WTC11 (cell line): ENCODE measurements at regions of chr6 and their contacts with region 1.

Region 1: GRCh38 chr6:90393232-90393884 is 96.7 kb upstream of the BACH2 start:
- DNase-seq: peak; percentile 69
- ATAC-seq: peak; percentile 92
- H3K4me3 Mint-ChIP-seq: no peak overlapping the region
- H3K27ac Mint-ChIP-seq: no peak overlapping the region
- H3K4me1 Mint-ChIP-seq: peaks cover 26% of the 10 kb centered on the region
- H3K27me3 Mint-ChIP-seq: peaks cover 2% of the 10 kb centered on the region; the same call in 1 of the 2 replicates
- CTCF ChIP-seq: peak; percentile 56

Region 2: GRCh38 chr6:90285611-90286381 is 107.6 kb before region 1 on chr6:
- CTCF ChIA-PET with region 1: interaction called, 30 read pairs
- POLR2A ChIA-PET with region 1: no interaction called
- DNase-seq: peak; percentile 62
- ATAC-seq: peak; percentile 75
- H3K4me3 Mint-ChIP-seq: peak overlapping the region; percentile 24; the same call in 1 of the 2 replicates
- H3K27ac Mint-ChIP-seq: peak overlapping the region; percentile 3; the same call in 1 of the 2 replicates
- H3K4me1 Mint-ChIP-seq: peaks cover 45% of the 10 kb centered on the region
- H3K27me3 Mint-ChIP-seq: no peaks in the 10 kb centered on the region
- CTCF ChIP-seq: no peak

Region 3: GRCh38 chr6:90296346-90297114 is 96.8 kb before region 1 on chr6 and contains the start of gene BACH2:
- CTCF ChIA-PET with region 1: interaction called, 11 read pairs
- POLR2A ChIA-PET with region 1: no interaction called
- DNase-seq: peak; percentile 95
- ATAC-seq: peak; percentile 75
- H3K4me3 Mint-ChIP-seq: peak within 1 kb of the TSS; percentile 74
- H3K27ac Mint-ChIP-seq: no peak within 1 kb of the TSS
- H3K4me1 Mint-ChIP-seq: peaks cover 34% of the 10 kb centered on the region
- H3K27me3 Mint-ChIP-seq: peaks cover 51% of the 10 kb centered on the region
- CTCF ChIP-seq: no peak
- total RNA-seq, gene BACH2: 3.9 to 5.9 TPM (median 4.5 TPM) in 3 replicates

Region 4: GRCh38 chr6:90403489-90404381 is 10.4 kb after region 1 on chr6:
- CTCF ChIA-PET with region 1: interaction called, 23 read pairs
- POLR2A ChIA-PET with region 1: no interaction called
- DNase-seq: no peak
- ATAC-seq: peak; percentile 82
- H3K4me3 Mint-ChIP-seq: no peak overlapping the region
- H3K27ac Mint-ChIP-seq: no peak overlapping the region
- H3K4me1 Mint-ChIP-seq: peaks cover 28% of the 10 kb centered on the region
- H3K27me3 Mint-ChIP-seq: peaks cover 29% of the 10 kb centered on the region
- CTCF ChIP-seq: no peak

Region 5: GRCh38 chr6:90444160-90444714 is 50.9 kb after region 1 on chr6:
- CTCF ChIA-PET with region 1: interaction called, 11 read pairs
- POLR2A ChIA-PET with region 1: no interaction called
- DNase-seq: no peak
- ATAC-seq: no peak
- H3K4me3 Mint-ChIP-seq: no peak overlapping the region
- H3K27ac Mint-ChIP-seq: no peak overlapping the region
- H3K4me1 Mint-ChIP-seq: peaks cover 37% of the 10 kb centered on the region
- H3K27me3 Mint-ChIP-seq: no peaks in the 10 kb centered on the region; the same call in 1 of the 2 replicates
- CTCF ChIP-seq: no peak

Region 6: DNA sequence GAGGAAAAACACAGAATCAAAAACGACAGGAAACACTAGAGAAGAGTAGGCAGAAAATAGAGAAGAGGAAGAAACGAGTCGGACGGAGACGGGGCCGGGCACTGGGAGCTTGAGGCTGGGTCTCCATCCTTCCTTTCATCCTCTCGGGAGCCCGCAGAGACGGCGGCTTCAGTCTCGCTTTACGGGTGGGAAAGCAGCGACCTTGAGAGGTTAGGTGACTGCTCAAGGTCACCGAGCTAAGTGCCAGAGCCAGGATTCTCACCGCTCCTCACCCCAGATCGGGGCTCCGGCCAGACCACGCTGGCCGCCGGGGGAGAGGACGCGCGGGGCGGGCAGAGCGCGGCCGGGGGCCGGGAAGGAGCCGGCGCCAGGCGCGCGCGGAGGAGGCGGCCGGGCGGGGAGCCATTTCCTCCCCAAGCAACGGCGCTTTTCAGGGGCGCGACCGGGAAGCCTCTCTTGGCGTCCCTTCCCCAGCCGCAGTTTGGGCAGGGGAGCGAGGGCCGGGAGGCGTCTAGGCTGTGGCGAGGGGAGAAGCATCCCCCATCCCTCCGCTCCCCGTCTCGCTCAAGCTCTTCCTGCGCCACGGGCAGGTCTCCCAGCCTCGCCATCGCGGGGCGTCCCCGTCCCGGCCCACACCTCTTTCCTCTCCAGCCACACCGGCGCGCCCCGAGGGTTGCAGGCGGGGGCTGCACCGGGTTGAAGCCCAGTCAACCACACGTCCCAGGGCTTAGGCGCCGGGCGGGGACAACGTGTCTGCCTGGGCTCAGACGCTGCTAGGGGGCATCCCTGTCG is 217.6 kb after region 1 on chr6:
- CTCF ChIA-PET with region 1: no interaction called
- POLR2A ChIA-PET with region 1: no interaction called
- DNase-seq: peak; percentile 68
- ATAC-seq: peak; percentile 65
- H3K4me3 Mint-ChIP-seq: peak overlapping the region; percentile 87
- H3K27ac Mint-ChIP-seq: peak overlapping the region; percentile 82
- H3K4me1 Mint-ChIP-seq: peaks cover 61% of the 10 kb centered on the region
- H3K27me3 Mint-ChIP-seq: peaks cover 7% of the 10 kb centered on the region
- CTCF ChIP-seq: no peak